ENCODE measurements at regions of chr2 and their contacts with region 1.

Region 1: GRCh38 chr2:24658531-24659202 is 134.5 kb downstream of the PTRHD1 start:
- DNase-seq: peak in 4 of 5 donors; percentile 9 to 53 (median 29)
- ATAC-seq: peak; percentile 82 to 93 (median 88)
- H3K4me3 ChIP-seq: no peak overlapping the region
- H3K27ac ChIP-seq: peak overlapping the region in 11 of 12 donors; percentile 15 to 67 (median 41)
- H3K4me1 ChIP-seq: peaks cover 0 to 40% (median 12%) of the 10 kb centered on the region in 12 donors
- H3K27me3 ChIP-seq: no peaks in the 10 kb centered on the region
- CTCF ChIP-seq: no peak
- POLR2A ChIP-seq: no peak

Region 2: GRCh38 chr2:24643051-24643450 is 15.6 kb before region 1 on chr2:
- intact Hi-C with region 1: loop called in 1 of 10 experiments (anchors 2 kb)
- DNase-seq: no peak
- ATAC-seq: no peak
- H3K4me3 ChIP-seq: no peak overlapping the region
- H3K27ac ChIP-seq: no peak overlapping the region
- H3K4me1 ChIP-seq: peaks cover 0 to 12% (median 0%) of the 10 kb centered on the region in 12 donors
- H3K27me3 ChIP-seq: no peaks in the 10 kb centered on the region
- CTCF ChIP-seq: no peak
- POLR2A ChIP-seq: no peak

Region 3: GRCh38 chr2:24754985-24755705 is 96.5 kb after region 1 on chr2:
- intact Hi-C with region 1: no loop called
- DNase-seq: no peak
- ATAC-seq: no peak
- H3K4me3 ChIP-seq: no peak overlapping the region
- H3K27ac ChIP-seq: no peak overlapping the region
- H3K4me1 ChIP-seq: no peaks in the 10 kb centered on the region
- H3K27me3 ChIP-seq: no peaks in the 10 kb centered on the region
- CTCF ChIP-seq: no peak
- POLR2A ChIP-seq: no peak

Measured in heart left ventricle (tissue), 16 donors.